Motor neuron (in vitro differentiated cells): ENCODE measurements at regions of chr2 and their contacts with region 1.

Region 1: DNA sequence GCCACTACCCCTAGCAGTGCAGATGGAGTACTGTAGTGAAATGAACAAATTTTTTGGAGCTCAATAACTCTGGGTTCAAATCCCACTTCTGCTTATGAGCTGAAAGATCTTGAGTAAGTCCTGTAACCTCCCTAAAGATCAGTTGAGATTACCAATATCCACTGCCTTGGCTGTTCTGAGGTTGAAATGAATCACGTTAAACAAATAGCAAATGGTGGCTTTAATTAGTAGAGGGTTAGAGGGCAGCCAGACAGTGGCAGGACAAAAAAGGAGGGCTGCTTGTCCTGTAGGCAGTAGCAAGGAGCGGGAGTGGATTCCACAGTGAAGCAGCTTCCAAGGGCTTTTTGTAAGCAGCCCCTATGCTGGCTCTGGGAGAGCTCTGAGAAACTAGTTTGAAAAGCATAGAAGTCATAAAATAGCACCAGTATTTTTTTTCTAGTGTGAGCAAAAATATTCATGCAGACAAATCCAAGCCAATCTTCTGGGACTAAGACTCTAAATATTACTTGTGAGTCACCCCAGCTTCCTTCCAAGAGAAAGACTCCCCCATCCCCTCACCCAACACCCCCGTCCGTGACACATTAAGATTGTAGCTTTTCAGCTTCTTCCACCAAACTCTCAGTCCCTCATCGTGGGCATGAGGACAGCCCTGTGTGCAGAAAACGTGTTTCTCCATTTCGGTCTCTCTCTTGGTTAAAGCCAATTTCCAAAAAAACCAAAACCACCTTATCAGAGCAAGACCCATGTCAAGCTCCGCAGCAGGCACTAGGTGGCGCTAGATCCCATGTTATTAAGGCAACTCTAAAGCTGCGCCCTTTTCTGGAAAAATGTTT is 123.5 kb upstream of the LGALSL start:
- ATAC-seq: peak; percentile 37 to 83 (median 72)
- H3K4me3 ChIP-seq: peak overlapping the region in 2 of 5 donors; percentile 10 to 25
- H3K27ac ChIP-seq: no peak overlapping the region
- H3K4me1 ChIP-seq: peaks cover 24 to 26% of the 10 kb centered on the region in 2 donors

Region 2: DNA sequence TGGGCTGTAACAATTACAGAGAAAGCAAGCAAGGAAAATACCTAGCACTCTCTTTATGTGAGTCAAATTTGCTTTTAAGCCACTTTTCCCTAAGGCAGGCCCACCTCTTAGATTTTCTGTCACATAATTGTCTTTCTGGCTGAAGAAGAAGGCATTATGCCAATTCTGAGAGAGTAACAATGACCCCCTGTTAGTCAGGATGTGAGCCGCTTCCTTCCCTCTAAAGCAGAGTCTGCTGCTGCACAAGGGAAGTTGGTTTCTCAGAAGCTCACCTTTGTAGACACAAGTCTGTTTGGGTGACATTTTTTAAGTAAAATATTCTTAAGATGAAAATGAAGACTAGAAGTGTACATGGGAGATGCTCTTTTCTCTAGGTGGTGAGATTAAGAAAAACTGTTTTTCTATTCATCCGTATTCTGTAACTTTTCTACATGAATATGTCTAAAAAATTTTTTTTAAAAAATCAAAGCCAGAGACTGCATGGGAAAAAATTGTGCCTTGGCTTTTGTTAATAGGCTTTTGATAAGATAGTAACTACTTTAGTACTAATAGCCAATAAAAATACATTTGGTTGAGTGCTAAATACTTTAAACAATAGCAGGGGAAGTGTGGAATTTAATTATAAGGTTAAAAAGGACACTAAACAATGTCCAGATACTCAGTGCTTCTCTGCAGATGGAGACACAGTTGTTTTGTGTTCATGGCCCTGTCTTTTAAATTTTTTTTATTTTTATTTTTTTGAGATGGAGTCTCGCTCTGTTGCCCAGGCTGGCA is 277.8 kb before region 1 on chr2:
- in situ Hi-C with region 1: loop called in 1 of 9 experiments (anchors 5 kb)
- ATAC-seq: no peak
- H3K4me3 ChIP-seq: no peak overlapping the region
- H3K27ac ChIP-seq: no peak overlapping the region
- H3K4me1 ChIP-seq: no peaks in the 10 kb centered on the region

Region 3: DNA sequence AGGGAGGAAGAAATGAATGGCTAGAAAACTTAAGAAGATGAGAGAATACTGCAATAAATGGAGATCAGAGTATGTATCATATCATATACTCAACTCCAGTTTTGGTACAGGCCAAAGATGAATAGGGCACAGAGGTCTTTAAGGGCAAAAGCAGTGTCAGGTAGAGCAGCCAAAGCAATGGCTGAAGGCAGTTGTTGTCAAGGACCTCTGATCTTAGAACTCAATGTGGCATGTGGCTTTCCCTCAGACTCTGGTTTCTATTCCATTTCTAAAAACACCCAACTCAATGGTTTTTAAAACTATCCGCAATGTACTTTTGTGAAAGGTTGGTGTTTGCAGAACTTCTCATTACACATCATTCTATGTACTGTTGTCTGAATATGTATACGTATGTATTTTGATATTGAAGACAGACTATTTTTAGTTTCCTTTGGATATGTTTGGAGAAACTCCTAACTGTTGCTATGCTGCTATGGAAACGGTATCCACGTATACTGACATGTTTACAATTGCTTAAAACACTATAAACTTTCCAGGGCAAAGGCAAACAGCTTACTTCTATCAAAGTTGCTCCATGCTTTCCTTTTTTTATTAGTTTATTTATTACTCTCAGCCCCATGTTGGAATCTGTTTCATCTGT is 128.2 kb before region 1 on chr2:
- in situ Hi-C with region 1: no loop called
- ATAC-seq: peak in 4 of 8 experiments; percentile 63 to 95 (median 76)
- H3K4me3 ChIP-seq: no peak overlapping the region
- H3K27ac ChIP-seq: no peak overlapping the region
- H3K4me1 ChIP-seq: peaks cover 11 to 15% of the 10 kb centered on the region in 2 donors

Region 4: GRCh38 chr2:64488050-64488974 is 157.8 kb after region 1 on chr2:
- in situ Hi-C with region 1: loop called in 6 of 9 experiments (anchors 25 kb)
- ATAC-seq: peak; percentile 8 to 77 (median 60)
- H3K4me3 ChIP-seq: no peak overlapping the region
- H3K27ac ChIP-seq: no peak overlapping the region
- H3K4me1 ChIP-seq: peaks cover 11 to 22% of the 10 kb centered on the region in 2 donors

Region 5: DNA sequence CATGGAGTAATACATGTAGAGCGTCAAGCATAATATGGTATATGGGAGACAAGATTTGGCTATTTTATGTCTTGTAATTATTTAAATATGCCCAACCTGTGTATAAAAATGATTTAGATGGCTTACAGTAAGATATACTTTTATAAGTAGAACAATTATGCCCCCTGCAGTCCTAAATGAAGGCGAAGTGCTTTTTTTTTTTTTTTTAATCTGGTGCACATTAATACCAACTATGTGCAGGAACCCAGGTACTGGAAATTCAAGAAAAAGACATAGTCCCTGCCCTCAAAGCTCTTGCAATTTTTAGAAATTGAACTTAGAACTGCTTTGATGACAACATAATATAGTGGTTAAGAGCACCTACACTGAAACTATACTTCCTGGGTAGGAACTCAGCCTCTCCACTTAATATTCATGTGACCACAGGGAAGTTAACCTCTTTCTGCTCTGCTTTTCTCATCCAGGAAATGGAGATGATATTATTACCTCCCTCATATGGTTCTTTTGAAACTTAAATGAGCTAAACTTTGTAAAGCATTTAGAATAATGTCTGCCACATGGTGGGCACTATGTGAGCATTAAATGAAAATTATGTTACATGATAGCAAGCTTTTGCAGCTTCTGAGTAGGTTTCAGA is 231.8 kb after region 1 on chr2:
- in situ Hi-C with region 1: loop called in 2 of 9 experiments (anchors 25 kb)
- ATAC-seq: peak in 2 of 8 experiments; percentile 39 to 59
- H3K4me3 ChIP-seq: no peak overlapping the region
- H3K27ac ChIP-seq: no peak overlapping the region
- H3K4me1 ChIP-seq: no peaks in the 10 kb centered on the region